ENCODE measurements at regions of chr7 and their contacts with region 1.

Region 1: GRCh38 chr7:91784463-91784862 is 96.0 kb downstream of the MTERF1 start:
- DNase-seq: no peak
- H3K4me3 ChIP-seq: no peak overlapping the region
- H3K27ac ChIP-seq: no peak overlapping the region
- H3K4me1 ChIP-seq: no peaks in the 10 kb centered on the region
- H3K27me3 ChIP-seq: no peaks in the 10 kb centered on the region
- CTCF ChIP-seq: peak in 3 of 4 experiments; percentile 17 to 39 (median 30)
- EP300 ChIP-seq: no peak
- POLR2A ChIP-seq: no peak

Region 2: GRCh38 chr7:91089382-91089963 is 695.0 kb before region 1 on chr7:
- intact Hi-C with region 1: loop called (anchors 2 kb)
- DNase-seq: no peak
- H3K4me3 ChIP-seq: peak overlapping the region in 3 of 4 donors; percentile 22 to 30 (median 23)
- H3K27ac ChIP-seq: no peak overlapping the region
- H3K4me1 ChIP-seq: no peaks in the 10 kb centered on the region
- H3K27me3 ChIP-seq: no peaks in the 10 kb centered on the region
- CTCF ChIP-seq: peak in 3 of 4 experiments; percentile 22 to 76 (median 50)
- EP300 ChIP-seq: no peak
- POLR2A ChIP-seq: no peak

Region 3: GRCh38 chr7:91692800-91693199 is 91.7 kb before region 1 on chr7:
- intact Hi-C with region 1: no loop called
- DNase-seq: no peak
- H3K4me3 ChIP-seq: no peak overlapping the region
- H3K27ac ChIP-seq: peak overlapping the region in 3 of 4 donors; percentile 60 to 69 (median 65)
- H3K4me1 ChIP-seq: peaks cover 0 to 58% (median 42%) of the 10 kb centered on the region in 4 donors
- H3K27me3 ChIP-seq: no peaks in the 10 kb centered on the region
- CTCF ChIP-seq: no peak
- EP300 ChIP-seq: peak in 3 of 4 donors; percentile 14 to 74 (median 48)
- POLR2A ChIP-seq: no peak

Region 4: DNA sequence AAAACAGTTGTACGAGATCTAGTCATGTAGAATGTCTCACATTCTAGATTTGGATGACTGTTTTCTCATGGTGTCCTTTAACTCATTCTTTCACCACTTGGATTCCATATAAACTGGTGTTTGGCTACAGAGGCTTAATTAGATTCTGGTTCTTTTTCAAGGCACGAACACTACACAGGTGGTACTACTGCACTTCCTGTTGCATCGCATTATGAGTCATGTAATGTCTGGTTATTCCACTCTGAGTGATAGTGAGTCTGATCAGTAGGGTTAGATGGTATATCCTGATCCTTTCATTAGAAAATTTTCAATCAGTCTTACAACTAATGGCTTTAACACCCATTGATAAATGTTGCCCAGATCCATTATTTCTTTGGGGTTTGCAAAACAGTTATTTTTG is 145.0 kb after region 1 on chr7:
- intact Hi-C with region 1: no loop called
- DNase-seq: no peak
- H3K4me3 ChIP-seq: no peak overlapping the region
- H3K27ac ChIP-seq: no peak overlapping the region
- H3K4me1 ChIP-seq: no peaks in the 10 kb centered on the region
- H3K27me3 ChIP-seq: no peaks in the 10 kb centered on the region
- CTCF ChIP-seq: no peak
- EP300 ChIP-seq: no peak
- POLR2A ChIP-seq: no peak

Region 5: GRCh38 chr7:92436612-92437445 is 652.4 kb after region 1 on chr7:
- intact Hi-C with region 1: no loop called
- DNase-seq: no peak
- H3K4me3 ChIP-seq: no peak overlapping the region
- H3K27ac ChIP-seq: no peak overlapping the region
- H3K4me1 ChIP-seq: no peaks in the 10 kb centered on the region
- H3K27me3 ChIP-seq: no peaks in the 10 kb centered on the region
- CTCF ChIP-seq: no peak
- EP300 ChIP-seq: no peak
- POLR2A ChIP-seq: no peak